ENCODE measurements at regions of chr17 and their contacts with region 1.

Region 1: GRCh38 chr17:61188081-61188480 is 211.6 kb upstream of the TBX2 start:
- DNase-seq: no peak
- H3K4me3 ChIP-seq: no peak overlapping the region
- CTCF ChIP-seq: no peak
- POLR2A ChIP-seq: no peak

Region 2: DNA sequence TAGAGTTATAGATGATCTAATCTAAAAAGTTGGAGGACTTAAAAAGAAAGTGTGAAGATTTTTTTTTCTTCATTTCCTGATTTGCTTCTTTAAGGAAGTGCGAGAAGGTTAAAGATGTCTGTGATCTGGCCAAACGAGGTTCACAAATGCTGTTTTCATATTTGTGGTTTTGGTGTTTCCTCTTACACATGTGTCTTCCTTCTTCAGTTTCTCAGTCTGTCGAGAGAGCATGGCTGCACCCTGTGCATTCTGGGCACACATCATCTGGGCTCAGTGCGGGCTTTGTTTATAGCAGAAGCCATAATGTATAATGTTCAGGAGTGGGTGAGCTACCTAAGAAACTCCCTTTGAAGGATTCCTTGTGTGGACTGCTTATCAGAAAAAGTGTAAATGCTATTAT is 48.9 kb before region 1 on chr17:
- intact Hi-C with region 1: loop called (anchors 1 kb)
- DNase-seq: no peak
- H3K4me3 ChIP-seq: no peak overlapping the region
- CTCF ChIP-seq: no peak
- POLR2A ChIP-seq: no peak

Region 3: GRCh38 chr17:61399131-61400057 is 211.3 kb after region 1 on chr17 and contains the start of gene TBX2:
- intact Hi-C with region 1: no loop called
- DNase-seq: no peak
- H3K4me3 ChIP-seq: peak within 1 kb of the TSS; percentile 21
- CTCF ChIP-seq: no peak
- POLR2A ChIP-seq: no peak
- total RNA-seq, gene TBX2: 0.25 to 9.1 (median 5.7) TPM